Activated CD4-positive, alpha-beta memory T cell treated with anti-CD3 and anti-CD28 coated beads, Interleukin-2, amount 10 ng/mL, durations not matched to agents 7 days and 5 days (primary cell): ENCODE measurements at regions of chr6 and their contacts with region 1.

Region 1: DNA sequence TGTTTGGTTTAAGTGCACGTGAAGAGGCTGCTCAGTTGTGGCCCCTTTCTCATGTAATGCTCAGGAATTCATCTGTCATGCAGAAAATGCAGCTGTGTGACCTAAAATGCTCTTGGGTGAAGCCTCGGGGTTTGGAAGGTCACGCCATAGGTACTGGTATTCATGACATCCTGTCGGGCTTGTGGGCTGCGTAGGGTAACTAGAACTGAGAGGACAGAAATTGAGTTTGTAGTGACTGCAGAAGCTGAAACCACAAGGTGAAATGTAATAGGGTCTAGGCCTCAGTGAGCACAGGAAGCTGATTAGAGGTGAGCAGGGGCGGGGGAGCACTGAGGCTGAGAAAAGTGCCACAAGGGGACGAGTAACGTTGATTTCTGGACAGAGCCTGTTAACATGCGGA is 128.8 kb downstream of the SOBP start:
- DNase-seq: peak; percentile 71
- H3K4me3 Mint-ChIP-seq: no peak overlapping the region
- H3K27ac Mint-ChIP-seq: peak overlapping the region; percentile 82
- H3K4me1 Mint-ChIP-seq: peaks cover 23% of the 10 kb centered on the region
- H3K27me3 Mint-ChIP-seq: peaks cover 12% of the 10 kb centered on the region

Region 2: GRCh38 chr6:107657755-107658461 is 39.2 kb after region 1 on chr6:
- CTCF ChIA-PET with region 1: interaction called, 3 read pairs
- POLR2A ChIA-PET with region 1: interaction called, 10 read pairs
- DNase-seq: peak; percentile 83
- H3K4me3 Mint-ChIP-seq: peak overlapping the region; percentile 66
- H3K27ac Mint-ChIP-seq: peak overlapping the region; percentile 92
- H3K4me1 Mint-ChIP-seq: peaks cover 39% of the 10 kb centered on the region
- H3K27me3 Mint-ChIP-seq: peaks cover 19% of the 10 kb centered on the region

Region 3: DNA sequence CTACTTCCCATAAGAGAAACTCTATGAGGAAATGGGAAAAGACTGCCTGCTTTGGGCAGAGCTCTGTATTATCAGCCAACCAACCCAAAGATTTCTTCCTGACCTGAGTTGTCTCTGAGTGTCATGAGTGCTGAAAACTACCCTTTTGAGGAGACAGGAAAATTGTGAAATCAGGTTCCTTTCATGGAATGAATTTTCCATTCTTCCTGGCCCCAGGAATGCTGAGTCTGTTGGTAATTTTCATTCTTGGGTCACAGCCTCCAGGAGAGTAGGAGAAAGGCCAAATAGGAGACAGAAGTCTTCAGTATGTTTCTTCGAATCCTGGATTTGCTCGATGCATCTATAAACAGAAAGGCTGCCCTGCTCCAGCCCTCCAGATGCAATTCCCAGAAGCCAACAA is 151.9 kb after region 1 on chr6:
- CTCF ChIA-PET with region 1: no interaction called
- POLR2A ChIA-PET with region 1: no interaction called
- DNase-seq: no peak
- H3K4me3 Mint-ChIP-seq: no peak overlapping the region
- H3K27ac Mint-ChIP-seq: no peak overlapping the region
- H3K4me1 Mint-ChIP-seq: no peaks in the 10 kb centered on the region
- H3K27me3 Mint-ChIP-seq: no peaks in the 10 kb centered on the region